ENCODE measurements at regions of chr1 and their contacts with region 1.

Region 1: DNA sequence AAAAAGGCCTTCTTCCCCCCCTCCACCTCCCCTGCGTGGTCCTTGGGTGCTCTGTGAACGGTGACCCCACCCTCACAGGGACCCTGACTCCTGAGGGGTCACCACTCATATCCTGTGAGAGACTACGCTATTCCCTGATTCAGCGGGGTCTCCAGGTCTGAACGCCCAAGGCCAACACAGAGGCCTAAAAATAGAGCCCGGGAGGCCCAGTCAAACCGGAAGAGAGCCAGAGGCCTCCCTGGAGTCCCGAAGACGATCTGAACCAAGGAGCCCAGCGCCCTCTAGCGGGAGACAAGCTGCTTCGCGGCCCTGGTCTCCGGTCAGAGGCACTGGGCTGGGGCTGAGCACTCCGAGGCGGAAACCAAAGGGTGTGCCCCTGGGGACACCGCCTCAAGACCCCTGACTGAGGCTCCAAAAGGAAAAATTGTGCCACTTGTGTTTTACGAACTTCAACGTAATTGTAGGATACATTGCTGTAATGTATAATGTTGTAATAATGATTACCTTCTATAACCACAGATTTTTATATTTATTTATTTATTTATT is 42.4 kb upstream of the PSEN2 start:
- DNase-seq: peak; percentile 89 to 93 (median 93)
- H3K4me3 ChIP-seq: peak overlapping the region; percentile 6 to 71 (median 33)
- H3K4me3 Mint-ChIP-seq: peak overlapping the region; percentile 67 to 86
- H3K27ac ChIP-seq: peak overlapping the region in 1 of 2 donors; percentile 87
- H3K27ac Mint-ChIP-seq: peak overlapping the region; percentile 82 to 94 (median 87)
- H3K4me1 ChIP-seq: peaks cover 10 to 13% of the 10 kb centered on the region in 2 donors
- H3K4me1 Mint-ChIP-seq: peaks cover 18% of the 10 kb centered on the region
- H3K27me3 ChIP-seq: no peaks in the 10 kb centered on the region
- H3K27me3 Mint-ChIP-seq: peaks cover 0 to 1% (median 0%) of the 10 kb centered on the region in 3 donors
- CTCF ChIP-seq: peak; percentile 92

Region 2: GRCh38 chr1:226626577-226626956 is 201.5 kb before region 1 on chr1:
- intact Hi-C with region 1: loop called in 1 of 2 experiments (anchors 2 kb)
- DNase-seq: peak; percentile 71 to 84 (median 75)
- H3K4me3 ChIP-seq: no peak overlapping the region
- H3K4me3 Mint-ChIP-seq: peak overlapping the region in 1 of 2 donors; percentile 64
- H3K27ac ChIP-seq: no peak overlapping the region
- H3K27ac Mint-ChIP-seq: no peak overlapping the region
- H3K4me1 ChIP-seq: peaks cover 3 to 5% of the 10 kb centered on the region in 2 donors
- H3K4me1 Mint-ChIP-seq: peaks cover 17% of the 10 kb centered on the region
- H3K27me3 ChIP-seq: no peaks in the 10 kb centered on the region
- H3K27me3 Mint-ChIP-seq: peaks cover 0 to 5% (median 4%) of the 10 kb centered on the region in 3 donors
- CTCF ChIP-seq: peak; percentile 96

Region 3: GRCh38 chr1:226634166-226634588 is 193.9 kb before region 1 on chr1:
- intact Hi-C with region 1: loop called in 1 of 2 experiments (anchors 2 kb)
- DNase-seq: peak; percentile 58 to 77 (median 76)
- H3K4me3 ChIP-seq: no peak overlapping the region
- H3K4me3 Mint-ChIP-seq: no peak overlapping the region
- H3K27ac ChIP-seq: peak overlapping the region in 1 of 2 donors; percentile 38
- H3K27ac Mint-ChIP-seq: peak overlapping the region in 4 of 7 donors; percentile 20 to 73 (median 51)
- H3K4me1 ChIP-seq: peaks cover 0 to 9% of the 10 kb centered on the region in 2 donors
- H3K4me1 Mint-ChIP-seq: peaks cover 17% of the 10 kb centered on the region
- H3K27me3 ChIP-seq: no peaks in the 10 kb centered on the region
- H3K27me3 Mint-ChIP-seq: peaks cover 0 to 1% (median 1%) of the 10 kb centered on the region in 3 donors
- CTCF ChIP-seq: peak; percentile 96

Region 4: GRCh38 chr1:226736908-226737818 is 90.9 kb before region 1 on chr1:
- intact Hi-C with region 1: loop called in 1 of 2 experiments (anchors 10 kb)
- DNase-seq: peak in 2 of 3 donors; percentile 27 to 31
- H3K4me3 ChIP-seq: peak overlapping the region; percentile 68 to 97 (median 89)
- H3K4me3 Mint-ChIP-seq: peak overlapping the region; percentile 97 to 99
- H3K27ac ChIP-seq: peak overlapping the region in 1 of 2 donors; percentile 91
- H3K27ac Mint-ChIP-seq: peak overlapping the region in 2 of 7 donors; percentile 91 to 98
- H3K4me1 ChIP-seq: peaks cover 52 to 54% of the 10 kb centered on the region in 2 donors
- H3K4me1 Mint-ChIP-seq: peaks cover 50% of the 10 kb centered on the region
- H3K27me3 ChIP-seq: no peaks in the 10 kb centered on the region
- H3K27me3 Mint-ChIP-seq: no peaks in the 10 kb centered on the region
- CTCF ChIP-seq: peak; percentile 29

Region 5: DNA sequence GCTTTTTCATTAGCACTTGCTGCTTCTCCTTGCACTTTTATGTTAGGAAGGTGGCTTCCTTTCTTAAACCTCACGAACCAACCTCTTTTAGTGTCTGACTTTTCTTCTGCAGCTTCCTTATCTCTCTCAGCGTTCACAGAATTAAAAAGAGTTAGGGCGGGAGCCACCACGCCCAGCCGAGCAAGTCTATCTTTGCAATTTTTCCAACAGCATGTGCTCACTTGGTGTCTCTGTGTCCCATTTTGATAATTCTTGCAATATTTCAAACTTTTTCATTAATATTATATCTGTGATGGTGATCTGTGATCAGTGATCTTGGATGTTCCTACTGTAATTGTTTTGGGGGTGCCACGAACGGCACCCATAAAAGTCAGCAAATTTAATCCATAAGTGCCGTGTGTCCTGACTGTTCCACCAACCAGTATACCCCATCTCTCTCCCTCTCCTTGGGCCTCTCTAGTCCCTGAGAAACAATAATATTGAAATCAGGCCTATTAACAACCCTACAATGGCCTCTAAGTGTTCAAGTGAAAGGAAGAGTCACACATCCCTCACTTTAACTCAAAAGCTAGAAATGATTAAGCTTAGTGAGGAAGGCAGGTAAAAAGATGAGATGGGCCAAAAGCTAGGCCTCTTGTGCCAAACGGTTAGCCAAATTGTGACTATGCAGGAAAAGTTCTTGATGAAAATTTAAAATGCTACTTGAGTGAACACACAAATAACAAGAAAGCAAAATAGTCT is 73.1 kb before region 1 on chr1:
- intact Hi-C with region 1: loop called in 1 of 2 experiments (anchors 10 kb)
- DNase-seq: no peak
- H3K4me3 ChIP-seq: no peak overlapping the region
- H3K4me3 Mint-ChIP-seq: no peak overlapping the region
- H3K27ac ChIP-seq: no peak overlapping the region
- H3K27ac Mint-ChIP-seq: no peak overlapping the region
- H3K4me1 ChIP-seq: no peaks in the 10 kb centered on the region
- H3K4me1 Mint-ChIP-seq: no peaks in the 10 kb centered on the region
- H3K27me3 ChIP-seq: no peaks in the 10 kb centered on the region
- H3K27me3 Mint-ChIP-seq: peaks cover 0 to 5% (median 2%) of the 10 kb centered on the region in 3 donors
- CTCF ChIP-seq: no peak

Region 6: GRCh38 chr1:226809785-226810571 is 18.1 kb before region 1 on chr1:
- intact Hi-C with region 1: no loop called
- DNase-seq: no peak
- H3K4me3 ChIP-seq: no peak overlapping the region
- H3K4me3 Mint-ChIP-seq: no peak overlapping the region
- H3K27ac ChIP-seq: no peak overlapping the region
- H3K27ac Mint-ChIP-seq: peak overlapping the region in 1 of 7 donors; percentile 14
- H3K4me1 ChIP-seq: no peaks in the 10 kb centered on the region
- H3K4me1 Mint-ChIP-seq: no peaks in the 10 kb centered on the region
- H3K27me3 ChIP-seq: no peaks in the 10 kb centered on the region
- H3K27me3 Mint-ChIP-seq: peaks cover 0 to 9% (median 2%) of the 10 kb centered on the region in 3 donors
- CTCF ChIP-seq: no peak

Measured in CD14-positive monocyte (primary cell).